Uterus (tissue), 4 donors: ENCODE measurements at regions of chr12 and their contacts with region 1.

Region 1: GRCh38 chr12:115558281-115558680 is 719.2 kb downstream of the MED13L start:
- DNase-seq: no peak
- H3K4me3 ChIP-seq: no peak overlapping the region
- H3K27ac ChIP-seq: no peak overlapping the region
- H3K4me1 ChIP-seq: no peaks in the 10 kb centered on the region
- H3K27me3 ChIP-seq: no peaks in the 10 kb centered on the region
- CTCF ChIP-seq: no peak
- POLR2A ChIP-seq: no peak

Region 2: DNA sequence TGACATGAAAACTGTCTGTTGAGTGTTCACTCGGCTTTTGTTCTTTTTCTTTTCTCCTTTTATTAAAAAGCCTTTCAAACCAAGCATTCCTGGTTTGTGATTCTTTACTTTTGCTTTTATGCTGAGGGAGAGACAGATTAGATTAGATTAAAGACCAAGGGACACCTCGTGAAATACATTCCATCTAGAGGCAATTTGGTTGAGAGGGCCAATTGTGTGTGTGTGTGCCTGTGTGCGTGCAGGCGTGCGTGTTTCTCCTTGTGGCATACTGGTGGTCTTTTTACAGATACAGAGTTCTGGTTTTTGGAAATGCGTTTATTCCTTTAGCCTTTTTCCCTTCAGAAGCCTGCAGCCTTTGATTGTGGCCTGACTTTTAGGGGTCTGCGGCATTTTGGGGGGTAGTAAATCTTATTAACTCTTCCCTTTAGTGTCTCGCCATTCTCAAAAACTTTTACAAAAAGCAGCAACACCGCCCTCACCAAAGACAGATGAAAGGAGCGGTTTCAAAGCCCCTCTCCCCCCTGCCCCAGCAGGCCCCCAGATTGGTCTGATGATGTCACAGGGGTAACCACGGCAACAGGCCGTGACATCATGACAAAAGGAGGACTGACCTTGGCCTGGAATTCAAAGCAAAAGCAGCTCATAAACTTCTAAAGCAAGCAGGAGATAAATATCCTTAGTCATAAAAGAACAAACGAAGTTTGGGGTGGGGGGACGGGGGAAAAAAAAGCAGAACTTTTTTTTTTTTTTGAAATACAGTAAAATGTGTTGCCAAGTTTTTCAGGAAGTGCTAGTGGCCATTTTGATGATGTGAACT is 790.2 kb before region 1 on chr12:
- intact Hi-C with region 1: no loop called
- DNase-seq: no peak
- H3K4me3 ChIP-seq: no peak overlapping the region
- H3K27ac ChIP-seq: no peak overlapping the region
- H3K4me1 ChIP-seq: no peaks in the 10 kb centered on the region
- H3K27me3 ChIP-seq: no peaks in the 10 kb centered on the region
- CTCF ChIP-seq: no peak
- POLR2A ChIP-seq: no peak

Region 3: GRCh38 chr12:115500872-115501271 is 57.4 kb before region 1 on chr12:
- intact Hi-C with region 1: no loop called
- DNase-seq: no peak
- H3K4me3 ChIP-seq: no peak overlapping the region
- H3K27ac ChIP-seq: no peak overlapping the region
- H3K4me1 ChIP-seq: no peaks in the 10 kb centered on the region
- H3K27me3 ChIP-seq: no peaks in the 10 kb centered on the region
- CTCF ChIP-seq: no peak
- POLR2A ChIP-seq: no peak

Region 4: GRCh38 chr12:115541891-115542421 is 16.3 kb before region 1 on chr12:
- intact Hi-C with region 1: loop called (anchors 2 kb)
- DNase-seq: no peak
- H3K4me3 ChIP-seq: no peak overlapping the region
- H3K27ac ChIP-seq: no peak overlapping the region
- H3K4me1 ChIP-seq: no peaks in the 10 kb centered on the region
- H3K27me3 ChIP-seq: no peaks in the 10 kb centered on the region
- CTCF ChIP-seq: no peak
- POLR2A ChIP-seq: no peak